ENCODE measurements at regions of chrX and their contacts with region 1.

Region 1: DNA sequence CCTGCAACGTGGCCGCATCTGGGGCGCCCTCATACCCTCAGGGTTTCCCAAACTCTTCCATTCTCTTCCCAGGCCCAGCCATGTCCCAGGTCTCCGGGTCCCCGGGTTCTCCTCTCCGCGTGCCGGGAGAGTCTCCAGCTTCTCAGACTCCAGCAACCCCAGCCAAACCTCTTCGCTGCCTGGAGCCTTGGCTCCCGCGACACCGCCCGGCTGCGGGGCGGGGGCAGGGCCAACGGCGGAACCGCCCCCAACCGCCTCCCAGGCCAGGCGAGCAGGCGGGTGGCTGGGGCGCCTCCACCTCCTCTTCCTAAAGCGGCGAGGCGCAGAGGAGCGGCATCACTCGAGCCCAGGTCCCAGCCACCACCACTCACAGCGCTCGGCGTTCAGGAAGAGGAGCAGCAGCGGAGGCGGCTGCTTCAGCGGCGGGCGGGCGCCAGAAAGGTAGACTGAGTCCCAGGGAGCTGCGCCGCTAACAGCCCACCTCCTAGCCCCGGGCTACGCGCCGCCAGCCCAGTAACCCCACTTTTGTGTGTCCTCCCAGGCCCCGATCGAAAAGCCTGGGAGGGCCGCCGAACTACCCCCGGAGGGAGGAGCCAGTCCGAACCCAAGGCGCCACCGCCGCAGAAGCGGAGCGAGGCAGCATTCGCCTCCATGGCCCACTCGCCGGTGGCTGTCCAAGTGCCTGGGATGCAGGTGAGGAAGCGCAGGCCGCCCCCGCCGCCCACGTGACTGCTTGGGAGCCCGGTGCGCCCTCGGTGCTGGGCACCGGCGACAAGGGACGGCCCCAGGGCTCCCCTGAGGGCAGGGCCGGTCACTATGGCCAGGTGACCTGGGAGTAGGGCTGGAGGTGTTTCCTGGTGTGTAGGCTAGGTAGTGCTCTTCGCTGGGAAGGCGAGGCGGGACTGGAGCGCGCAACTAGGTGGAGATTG is at the start of gene STK26:
- DNase-seq: peak; percentile 50
- H3K4me3 ChIP-seq: peak within 1 kb of the TSS; percentile 4 to 73 (median 45)
- H3K27ac ChIP-seq: peak within 1 kb of the TSS; percentile 6
- H3K4me1 ChIP-seq: peaks cover 4% of the 10 kb centered on the region
- H3K27me3 ChIP-seq: no peaks in the 10 kb centered on the region
- CTCF ChIP-seq: no peak
- POLR2A ChIP-seq: no peak
- total RNA-seq, gene STK26: 3.7 and 5.2 TPM in 2 replicates

Region 2: DNA sequence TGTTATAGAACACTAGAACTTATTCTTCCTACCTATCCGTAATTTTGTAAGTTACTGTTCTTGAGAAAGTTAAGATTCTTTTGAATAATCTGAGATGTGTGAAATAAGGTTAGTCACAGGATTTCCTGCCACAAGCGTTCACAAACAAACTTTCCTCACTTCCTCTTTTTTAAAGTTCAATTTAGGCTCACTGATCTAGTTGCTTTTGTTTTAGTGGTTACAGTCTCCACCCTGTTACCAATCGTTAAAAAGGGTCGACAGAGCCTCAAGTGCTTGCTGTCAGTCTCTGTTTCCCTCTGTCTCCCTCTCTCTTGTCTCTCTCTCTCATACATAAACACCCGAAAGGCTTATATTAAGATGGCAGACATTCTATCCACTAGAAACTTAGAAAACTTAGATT is 36.0 kb before region 1 on chrX:
- CTCF ChIA-PET with region 1: no interaction called
- POLR2A ChIA-PET with region 1: no interaction called
- dilution Hi-C with region 1: no loop called
- intact Hi-C with region 1: loop called (anchors 5 kb)
- DNase-seq: peak; percentile 33
- H3K4me3 ChIP-seq: no peak overlapping the region
- H3K27ac ChIP-seq: peak overlapping the region; percentile 68
- H3K4me1 ChIP-seq: peaks cover 9% of the 10 kb centered on the region
- H3K27me3 ChIP-seq: no peaks in the 10 kb centered on the region
- CTCF ChIP-seq: no peak
- POLR2A ChIP-seq: no peak

Region 3: DNA sequence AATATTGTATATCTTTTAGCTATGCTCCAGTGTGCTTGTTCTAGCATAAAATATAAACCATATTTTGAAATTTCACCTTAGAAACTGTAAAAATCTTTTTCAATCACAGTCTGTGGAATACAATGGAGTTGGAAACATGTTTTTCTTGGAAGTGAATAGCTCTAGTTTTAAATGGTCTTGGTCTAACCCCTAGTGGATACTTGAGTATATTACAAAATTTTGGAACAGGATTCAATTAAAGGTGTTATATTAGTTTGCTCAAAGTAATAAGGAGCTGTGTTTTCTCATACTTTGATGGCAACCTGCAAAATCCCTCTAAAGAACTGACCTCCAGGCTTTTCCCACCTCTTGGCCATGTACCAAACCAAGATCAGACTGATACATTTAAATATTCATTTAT is 48.0 kb after region 1 on chrX:
- CTCF ChIA-PET with region 1: interaction called, 16 read pairs
- POLR2A ChIA-PET with region 1: no interaction called
- dilution Hi-C with region 1: no loop called
- intact Hi-C with region 1: loop called (anchors 2 kb)
- DNase-seq: peak; percentile 31
- H3K4me3 ChIP-seq: no peak overlapping the region
- H3K27ac ChIP-seq: no peak overlapping the region
- H3K4me1 ChIP-seq: no peaks in the 10 kb centered on the region
- H3K27me3 ChIP-seq: no peaks in the 10 kb centered on the region
- CTCF ChIP-seq: no peak
- POLR2A ChIP-seq: no peak

Region 4: GRCh38 chrX:132086672-132087071 is 63.4 kb after region 1 on chrX:
- CTCF ChIA-PET with region 1: interaction called, 8 read pairs
- POLR2A ChIA-PET with region 1: no interaction called
- dilution Hi-C with region 1: no loop called
- intact Hi-C with region 1: loop called (anchors 2 kb)
- DNase-seq: peak; percentile 47
- H3K4me3 ChIP-seq: no peak overlapping the region
- H3K27ac ChIP-seq: peak overlapping the region; percentile 11
- H3K4me1 ChIP-seq: peaks cover 14% of the 10 kb centered on the region
- H3K27me3 ChIP-seq: no peaks in the 10 kb centered on the region
- CTCF ChIP-seq: no peak
- POLR2A ChIP-seq: no peak